MCF 10A (cell line): ENCODE measurements at regions of chr15 and their contacts with region 1.

Region 1: GRCh38 chr15:63048115-63048775 is 5.7 kb downstream of the TPM1 start:
- DNase-seq: peak; percentile 83
- H3K4me3 Mint-ChIP-seq: peak overlapping the region; percentile 96
- H3K27ac Mint-ChIP-seq: peak overlapping the region; percentile 76
- H3K4me1 Mint-ChIP-seq: peaks cover 68% of the 10 kb centered on the region
- H3K27me3 Mint-ChIP-seq: no peaks in the 10 kb centered on the region
- CTCF ChIP-seq: peak; percentile 95

Region 2: GRCh38 chr15:62758126-62758951 is 289.9 kb before region 1 on chr15:
- CTCF ChIA-PET with region 1: interaction called, 9 read pairs
- POLR2A ChIA-PET with region 1: interaction called, 13 read pairs
- intact Hi-C with region 1: no loop called
- DNase-seq: peak; percentile 86
- H3K4me3 Mint-ChIP-seq: peak overlapping the region; percentile 47
- H3K27ac Mint-ChIP-seq: peak overlapping the region; percentile 74
- H3K4me1 Mint-ChIP-seq: peaks cover 30% of the 10 kb centered on the region
- H3K27me3 Mint-ChIP-seq: no peaks in the 10 kb centered on the region
- CTCF ChIP-seq: no peak

Region 3: GRCh38 chr15:62847900-62848489 is 200.2 kb before region 1 on chr15:
- CTCF ChIA-PET with region 1: interaction called, 9 read pairs
- POLR2A ChIA-PET with region 1: interaction called, 4 read pairs
- intact Hi-C with region 1: loop called (anchors 1 kb)
- DNase-seq: peak; percentile 75
- H3K4me3 Mint-ChIP-seq: no peak overlapping the region
- H3K27ac Mint-ChIP-seq: no peak overlapping the region
- H3K4me1 Mint-ChIP-seq: peaks cover 10% of the 10 kb centered on the region
- H3K27me3 Mint-ChIP-seq: no peaks in the 10 kb centered on the region
- CTCF ChIP-seq: peak; percentile 62

Region 4: GRCh38 chr15:63019539-63020109 is 28.6 kb before region 1 on chr15:
- CTCF ChIA-PET with region 1: interaction called, 10 read pairs
- POLR2A ChIA-PET with region 1: interaction called, 5 read pairs
- intact Hi-C with region 1: loop called (anchors 2 kb)
- DNase-seq: peak; percentile 98
- H3K4me3 Mint-ChIP-seq: peak overlapping the region; percentile 26
- H3K27ac Mint-ChIP-seq: peak overlapping the region; percentile 66
- H3K4me1 Mint-ChIP-seq: peaks cover 32% of the 10 kb centered on the region
- H3K27me3 Mint-ChIP-seq: no peaks in the 10 kb centered on the region
- CTCF ChIP-seq: no peak

Region 5: GRCh38 chr15:63079938-63080626 is 31.8 kb after region 1 on chr15:
- CTCF ChIA-PET with region 1: interaction called, 12 read pairs
- POLR2A ChIA-PET with region 1: interaction called, 14 read pairs
- intact Hi-C with region 1: no loop called
- DNase-seq: peak; percentile 26
- H3K4me3 Mint-ChIP-seq: no peak overlapping the region
- H3K27ac Mint-ChIP-seq: no peak overlapping the region
- H3K4me1 Mint-ChIP-seq: peaks cover 7% of the 10 kb centered on the region
- H3K27me3 Mint-ChIP-seq: no peaks in the 10 kb centered on the region
- CTCF ChIP-seq: no peak

Region 6: DNA sequence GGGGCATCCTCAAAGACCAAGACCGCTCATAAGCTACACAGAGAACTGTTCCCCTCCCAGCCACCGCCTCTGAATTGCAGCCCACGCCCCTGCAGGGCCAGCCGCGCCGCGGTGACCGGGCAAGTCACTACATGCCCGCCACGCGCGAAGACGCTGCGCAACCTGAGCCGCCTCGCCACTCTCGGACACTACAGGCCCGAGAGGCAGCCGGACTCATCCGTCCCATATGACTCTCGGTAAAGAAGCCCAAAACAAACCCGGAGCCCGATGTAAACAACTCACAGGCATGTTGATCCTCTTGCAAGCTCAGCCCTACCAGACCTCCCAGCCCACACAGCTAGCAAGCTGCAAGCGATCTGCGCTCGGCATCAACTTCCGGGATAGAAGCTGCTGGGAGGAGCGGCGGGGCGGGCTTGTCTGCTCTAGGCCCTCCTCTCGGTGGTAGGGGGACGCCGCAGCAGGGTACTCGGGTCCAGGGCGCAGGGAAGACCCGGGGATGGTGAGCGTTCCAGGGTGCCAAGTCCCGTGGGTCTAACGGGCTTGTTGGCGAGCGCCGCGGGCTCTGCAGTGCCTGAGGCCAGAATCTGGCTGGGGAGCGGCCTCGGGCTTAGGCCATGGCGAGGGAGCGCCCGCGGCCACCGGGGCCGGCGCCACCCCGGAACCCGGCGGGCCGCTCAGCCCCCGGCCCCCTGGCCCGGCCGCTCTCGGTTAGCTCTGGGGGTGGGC is 109.0 kb after region 1 on chr15 and contains the start of gene RPS27L:
- CTCF ChIA-PET with region 1: interaction called, 3 read pairs
- POLR2A ChIA-PET with region 1: interaction called, 11 read pairs
- intact Hi-C with region 1: no loop called
- DNase-seq: peak; percentile 91
- H3K4me3 Mint-ChIP-seq: peak within 1 kb of the TSS; percentile 92
- H3K27ac Mint-ChIP-seq: peak within 1 kb of the TSS; percentile 98
- H3K4me1 Mint-ChIP-seq: no peaks in the 10 kb centered on the region
- H3K27me3 Mint-ChIP-seq: no peaks in the 10 kb centered on the region
- CTCF ChIP-seq: no peak
- total RNA-seq, gene RPS27L: 154 and 172 TPM in 2 replicates

Region 7: DNA sequence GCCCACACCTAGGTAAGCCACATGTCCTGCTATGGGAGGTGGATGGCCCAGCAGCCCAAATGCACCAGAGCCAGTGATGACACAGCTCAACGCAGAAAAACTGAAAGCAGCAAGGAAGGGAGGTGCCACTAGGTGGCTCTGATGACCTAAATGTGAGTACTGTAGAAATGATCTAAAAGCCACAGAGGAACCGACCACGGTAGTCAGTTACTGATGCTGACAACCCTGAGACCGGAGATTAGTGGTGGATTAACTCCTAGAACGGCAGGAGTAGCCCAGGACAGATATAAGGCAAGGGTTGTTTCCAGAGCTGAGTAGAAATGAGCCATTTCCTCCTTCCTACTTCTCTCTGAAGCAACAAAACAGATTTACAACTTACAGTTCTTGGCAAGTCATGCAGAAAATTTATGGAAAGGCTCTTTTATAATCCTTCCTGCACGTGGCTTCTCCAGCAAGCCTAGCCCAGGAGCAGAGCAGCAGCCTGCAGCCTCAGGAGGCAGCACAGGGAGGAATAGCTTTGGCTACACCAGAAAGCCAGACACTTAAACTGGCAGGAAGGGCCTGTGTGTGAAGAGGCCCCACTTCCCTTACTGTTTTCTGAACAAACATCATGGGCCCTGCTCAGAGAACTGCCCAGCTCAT is 562.1 kb after region 1 on chr15:
- CTCF ChIA-PET with region 1: no interaction called
- POLR2A ChIA-PET with region 1: no interaction called
- intact Hi-C with region 1: no loop called
- DNase-seq: peak; percentile 78
- H3K4me3 Mint-ChIP-seq: no peak overlapping the region
- H3K27ac Mint-ChIP-seq: no peak overlapping the region
- H3K4me1 Mint-ChIP-seq: peaks cover 7% of the 10 kb centered on the region
- H3K27me3 Mint-ChIP-seq: no peaks in the 10 kb centered on the region
- CTCF ChIP-seq: peak; percentile 50